Posterior cingulate gyrus (tissue), 11 donors: ENCODE measurements at regions of chr18 and their contacts with region 1.

Region 1: GRCh38 chr18:32158108-32158624 is 31.7 kb upstream of the MEP1B start:
- DNase-seq: peak; percentile 60 to 96 (median 82)

Region 2: GRCh38 chr18:32271672-32272208 is 113.6 kb after region 1 on chr18:
- intact Hi-C with region 1: loop called (anchors 5 kb)
- DNase-seq: peak in 3 of 10 donors; percentile 26 to 41 (median 27)

Region 3: DNA sequence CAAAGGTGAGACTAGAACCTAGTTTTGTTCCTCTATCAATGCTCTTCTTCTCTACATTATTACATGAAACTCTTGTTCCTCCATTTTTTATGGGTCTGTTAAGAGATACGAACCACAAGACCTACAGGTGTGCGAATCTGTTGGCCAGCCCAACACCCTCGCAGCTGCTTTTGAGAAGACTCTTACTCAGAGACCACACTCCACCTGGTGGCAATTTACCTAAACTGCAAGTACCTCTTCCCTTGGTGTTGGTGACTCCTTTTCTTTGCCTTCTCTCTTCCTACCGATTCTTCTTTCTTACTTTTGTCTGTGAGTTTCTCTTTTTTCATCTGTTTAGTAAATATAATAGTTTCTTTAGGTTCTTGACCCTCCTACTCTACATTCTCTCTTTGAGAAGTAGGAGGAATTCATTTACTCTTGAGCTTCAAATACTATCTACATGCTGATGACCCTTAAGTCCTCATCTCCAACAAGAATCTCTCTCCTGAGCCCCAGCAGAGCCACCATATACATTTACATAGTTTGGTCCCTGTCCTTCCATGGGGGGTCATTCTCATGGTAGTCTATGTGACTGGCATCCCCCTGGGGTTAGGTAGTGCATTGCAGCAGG is 394.4 kb after region 1 on chr18:
- intact Hi-C with region 1: loop called (anchors 2 kb)
- DNase-seq: peak in 6 of 10 donors; percentile 32 to 82 (median 52)